CD4-positive, alpha-beta T cell (primary cell): ENCODE measurements at regions of chr18 and their contacts with region 1.

Region 1: GRCh38 chr18:48777026-48777743 is 173.6 kb downstream of the SMAD7 start:
- DNase-seq: peak; percentile 49 to 86 (median 66)
- ATAC-seq: peak; percentile 91
- H3K4me3 ChIP-seq: no peak overlapping the region
- H3K4me3 Mint-ChIP-seq: no peak overlapping the region
- H3K27ac ChIP-seq: no peak overlapping the region
- H3K27ac Mint-ChIP-seq: no peak overlapping the region
- H3K4me1 ChIP-seq: peaks cover 18% of the 10 kb centered on the region
- H3K4me1 Mint-ChIP-seq: peaks cover 6% of the 10 kb centered on the region
- H3K27me3 ChIP-seq: no peaks in the 10 kb centered on the region
- H3K27me3 Mint-ChIP-seq: no peaks in the 10 kb centered on the region
- CTCF ChIP-seq: peak; percentile 91

Region 2: DNA sequence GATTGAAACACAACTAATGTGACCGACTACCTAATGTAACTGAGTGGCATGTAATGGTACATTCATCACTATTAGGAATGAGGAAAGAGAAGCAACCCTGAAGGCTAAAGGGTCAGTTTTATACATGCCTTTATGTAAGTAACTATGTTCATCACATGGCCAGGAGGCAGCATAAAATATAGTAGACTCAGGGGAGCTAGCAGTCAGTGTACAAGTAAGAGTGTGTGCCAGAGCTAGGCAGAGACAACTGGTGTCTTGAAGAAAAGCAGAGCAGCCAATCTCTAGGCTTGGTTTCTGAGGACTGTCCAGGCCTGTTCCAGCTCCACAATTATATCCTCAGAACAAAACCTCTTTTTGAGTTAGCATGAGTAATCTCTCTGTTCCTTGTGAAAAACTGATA is 864.8 kb before region 1 on chr18:
- CTCF ChIA-PET with region 1: no interaction called
- POLR2A ChIA-PET with region 1: no interaction called
- intact Hi-C with region 1: no loop called
- DNase-seq: no peak
- ATAC-seq: peak; percentile 39
- H3K4me3 ChIP-seq: no peak overlapping the region
- H3K4me3 Mint-ChIP-seq: peak overlapping the region; percentile 6
- H3K27ac ChIP-seq: peak overlapping the region in 1 of 2 donors; percentile 53
- H3K27ac Mint-ChIP-seq: peak overlapping the region; percentile 66
- H3K4me1 ChIP-seq: peaks cover 31% of the 10 kb centered on the region
- H3K4me1 Mint-ChIP-seq: peaks cover 91% of the 10 kb centered on the region
- H3K27me3 ChIP-seq: no peaks in the 10 kb centered on the region
- H3K27me3 Mint-ChIP-seq: no peaks in the 10 kb centered on the region
- CTCF ChIP-seq: no peak

Region 3: DNA sequence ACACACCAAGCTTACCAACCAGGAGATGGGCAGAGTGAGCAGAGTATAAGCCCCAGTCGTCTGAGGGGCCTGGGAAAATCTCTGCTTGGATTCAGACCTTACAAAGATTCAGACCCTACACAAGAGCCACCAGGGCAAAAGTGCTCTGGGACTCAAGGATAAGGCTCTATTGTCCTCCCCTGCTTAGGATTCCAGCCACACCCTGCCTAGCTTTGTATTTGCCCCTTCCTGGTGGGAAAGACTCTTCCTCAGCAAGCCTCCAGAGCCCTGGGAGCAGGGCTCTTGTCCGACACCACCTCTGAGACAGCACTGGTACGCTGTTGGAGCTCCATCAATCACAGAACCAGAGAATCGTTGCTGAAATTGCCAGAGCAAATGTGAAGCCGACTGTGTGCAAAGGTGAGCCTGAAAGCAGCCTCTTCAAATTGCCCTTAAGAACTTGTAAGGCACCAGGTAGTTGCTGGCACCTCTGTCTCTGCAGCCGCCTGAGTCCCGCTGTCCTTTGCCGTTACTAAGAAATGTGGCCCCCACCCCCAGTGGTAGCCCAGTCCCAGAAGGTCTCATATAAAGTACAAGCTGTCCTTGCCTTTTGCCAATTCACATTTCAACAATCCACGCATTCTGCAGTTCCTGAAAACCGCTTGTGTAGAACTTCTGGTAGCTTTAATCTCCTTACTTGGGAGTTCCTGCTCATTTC is 89.7 kb before region 1 on chr18:
- CTCF ChIA-PET with region 1: no interaction called
- POLR2A ChIA-PET with region 1: no interaction called
- intact Hi-C with region 1: no loop called
- DNase-seq: no peak
- ATAC-seq: no peak
- H3K4me3 ChIP-seq: no peak overlapping the region
- H3K4me3 Mint-ChIP-seq: no peak overlapping the region
- H3K27ac ChIP-seq: no peak overlapping the region
- H3K27ac Mint-ChIP-seq: no peak overlapping the region
- H3K4me1 ChIP-seq: no peaks in the 10 kb centered on the region
- H3K4me1 Mint-ChIP-seq: no peaks in the 10 kb centered on the region
- H3K27me3 ChIP-seq: no peaks in the 10 kb centered on the region
- H3K27me3 Mint-ChIP-seq: no peaks in the 10 kb centered on the region
- CTCF ChIP-seq: no peak

Region 4: DNA sequence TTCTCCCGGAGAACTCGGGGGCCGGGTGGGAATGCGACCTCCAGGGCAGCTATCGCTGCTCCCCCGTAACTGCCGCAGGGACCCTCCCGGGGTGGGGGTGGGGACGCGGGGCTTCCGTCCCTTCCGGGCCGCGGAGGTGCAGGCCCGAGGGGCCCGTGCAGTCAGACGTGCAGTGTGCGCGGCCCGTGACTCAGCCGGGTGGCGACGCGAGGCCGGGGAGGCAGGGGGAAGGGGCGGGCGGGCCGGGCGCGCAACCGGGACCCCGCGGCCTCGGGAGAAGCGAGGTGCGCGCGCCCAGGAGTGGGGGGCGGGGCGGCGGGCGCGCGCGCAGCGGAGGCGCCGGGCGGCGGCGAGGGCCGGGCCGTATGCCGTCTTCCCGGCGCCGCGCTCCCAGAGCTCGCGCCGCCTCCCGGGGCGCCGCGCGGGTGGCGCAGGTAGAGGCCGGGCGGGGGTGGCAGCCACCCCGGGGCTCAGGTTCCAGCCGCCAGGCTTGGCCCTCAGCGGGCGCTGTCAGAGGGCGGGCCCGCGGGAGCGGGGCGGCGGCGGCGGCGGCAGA is 198.5 kb after region 1 on chr18:
- CTCF ChIA-PET with region 1: no interaction called
- POLR2A ChIA-PET with region 1: no interaction called
- intact Hi-C with region 1: loop called (anchors 1 to 5 kb)
- DNase-seq: peak; percentile 18 to 84 (median 48)
- ATAC-seq: peak; percentile 80
- H3K4me3 ChIP-seq: peak overlapping the region; percentile 52
- H3K4me3 Mint-ChIP-seq: no peak overlapping the region
- H3K27ac ChIP-seq: no peak overlapping the region
- H3K27ac Mint-ChIP-seq: no peak overlapping the region
- H3K4me1 ChIP-seq: peaks cover 22% of the 10 kb centered on the region
- H3K4me1 Mint-ChIP-seq: peaks cover 14% of the 10 kb centered on the region
- H3K27me3 ChIP-seq: peaks cover 0 to 7% of the 10 kb centered on the region in 2 experiments
- H3K27me3 Mint-ChIP-seq: peaks cover 36% of the 10 kb centered on the region
- CTCF ChIP-seq: no peak

Region 5: GRCh38 chr18:49178736-49179135 is 401.6 kb after region 1 on chr18:
- CTCF ChIA-PET with region 1: interaction called, 3 read pairs
- POLR2A ChIA-PET with region 1: no interaction called
- intact Hi-C with region 1: loop called (anchors 5 to 10 kb)
- DNase-seq: peak in 3 of 14 experiments; percentile 18 to 36 (median 23)
- ATAC-seq: no peak
- H3K4me3 ChIP-seq: no peak overlapping the region
- H3K4me3 Mint-ChIP-seq: no peak overlapping the region
- H3K27ac ChIP-seq: no peak overlapping the region
- H3K27ac Mint-ChIP-seq: no peak overlapping the region
- H3K4me1 ChIP-seq: no peaks in the 10 kb centered on the region
- H3K4me1 Mint-ChIP-seq: peaks cover 12% of the 10 kb centered on the region
- H3K27me3 ChIP-seq: no peaks in the 10 kb centered on the region
- H3K27me3 Mint-ChIP-seq: no peaks in the 10 kb centered on the region
- CTCF ChIP-seq: no peak

Region 6: DNA sequence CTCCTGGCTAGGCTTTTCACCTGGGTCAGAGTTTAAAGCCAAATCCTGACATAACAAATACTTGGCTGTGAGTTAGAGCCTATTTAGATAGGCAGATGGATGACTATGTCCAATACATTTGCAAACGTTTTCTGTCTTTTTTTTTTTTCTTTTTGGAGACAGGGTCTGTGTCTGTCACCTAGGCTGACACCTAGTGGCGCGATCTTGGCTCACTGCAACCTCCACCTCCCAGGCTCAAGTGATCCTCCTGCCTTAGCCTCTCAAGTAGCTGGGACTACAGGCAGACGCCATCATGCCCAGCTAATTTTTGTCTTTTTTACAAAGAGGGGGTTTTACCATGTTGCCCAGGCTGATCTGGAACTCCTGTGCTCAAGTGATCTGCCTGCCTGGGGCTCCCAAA is 558.5 kb after region 1 on chr18:
- CTCF ChIA-PET with region 1: no interaction called
- POLR2A ChIA-PET with region 1: no interaction called
- intact Hi-C with region 1: loop called in 1 of 2 experiments (anchors 10 kb)
- DNase-seq: peak in 5 of 14 experiments; percentile 0 to 19 (median 11)
- ATAC-seq: no peak
- H3K4me3 ChIP-seq: no peak overlapping the region
- H3K4me3 Mint-ChIP-seq: no peak overlapping the region
- H3K27ac ChIP-seq: no peak overlapping the region
- H3K27ac Mint-ChIP-seq: no peak overlapping the region
- H3K4me1 ChIP-seq: no peaks in the 10 kb centered on the region
- H3K4me1 Mint-ChIP-seq: no peaks in the 10 kb centered on the region
- H3K27me3 ChIP-seq: no peaks in the 10 kb centered on the region
- H3K27me3 Mint-ChIP-seq: no peaks in the 10 kb centered on the region
- CTCF ChIP-seq: peak; percentile 17